AG04450 (cell line): ENCODE measurements at regions of chr14 and their contacts with region 1.

Region 1: DNA sequence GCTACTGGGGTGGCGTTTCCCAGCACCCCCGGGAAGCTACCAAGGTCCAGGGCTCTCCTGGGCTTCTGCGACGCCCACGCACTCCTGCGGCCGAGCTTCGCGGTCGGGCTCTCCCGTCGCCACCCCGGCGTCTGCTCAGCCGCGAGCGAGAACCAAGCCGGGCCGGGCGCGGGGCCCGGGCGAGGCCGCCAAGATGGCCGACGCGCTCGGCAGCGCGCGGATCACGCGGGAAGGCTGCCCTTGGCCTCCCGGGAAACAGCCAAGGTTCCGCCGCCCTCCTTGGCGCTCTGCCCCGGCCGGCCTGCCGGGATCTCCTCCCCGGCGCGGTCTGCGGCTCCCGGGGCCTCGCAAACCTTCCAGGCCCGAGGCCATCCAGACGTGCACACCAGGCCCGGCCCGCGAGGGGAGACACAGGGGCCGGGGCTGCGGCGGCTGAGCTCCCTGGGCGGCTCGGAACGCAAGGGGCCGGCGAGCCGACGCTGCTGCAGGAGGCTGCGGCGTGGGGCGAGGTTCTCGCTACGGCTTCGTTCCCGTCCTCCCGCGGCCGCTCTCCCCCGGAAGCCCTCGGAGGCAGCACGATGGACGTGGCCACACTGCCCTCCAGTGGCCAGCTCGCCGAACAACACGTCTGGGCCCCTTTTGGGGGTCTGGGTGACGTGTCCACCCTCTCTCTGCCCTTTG is 23.5 kb upstream of the ZFP36L1 start:
- DNase-seq: peak; percentile 79
- H3K4me3 ChIP-seq: peak overlapping the region; percentile 46
- H3K27ac ChIP-seq: peak overlapping the region; percentile 95
- H3K27me3 ChIP-seq: no peaks in the 10 kb centered on the region
- CTCF ChIP-seq: peak; percentile 94

Region 2: DNA sequence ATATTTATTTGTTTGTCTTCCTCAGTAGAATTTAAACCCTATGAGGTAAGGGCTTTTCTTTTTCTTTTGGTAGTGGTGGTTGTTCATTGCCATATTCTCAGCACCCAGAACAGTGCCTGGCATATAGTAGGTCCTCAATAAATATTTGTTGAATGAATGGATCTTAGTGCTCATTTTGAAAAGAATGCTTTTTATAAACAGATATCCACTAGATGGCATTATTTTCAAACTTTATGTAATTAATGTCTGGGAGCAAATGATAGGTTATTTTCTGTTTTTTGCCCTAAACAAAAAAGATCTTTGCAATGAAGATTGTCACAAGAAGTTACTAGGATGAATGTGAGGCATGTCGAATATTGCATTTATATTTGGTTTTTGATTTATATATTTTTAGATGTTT is 932.7 kb before region 1 on chr14:
- CTCF ChIA-PET with region 1: interaction called, 13 read pairs
- POLR2A ChIA-PET with region 1: no interaction called
- DNase-seq: no peak
- H3K4me3 ChIP-seq: no peak overlapping the region
- H3K27ac ChIP-seq: no peak overlapping the region
- H3K27me3 ChIP-seq: no peaks in the 10 kb centered on the region
- CTCF ChIP-seq: peak; percentile 28

Region 3: DNA sequence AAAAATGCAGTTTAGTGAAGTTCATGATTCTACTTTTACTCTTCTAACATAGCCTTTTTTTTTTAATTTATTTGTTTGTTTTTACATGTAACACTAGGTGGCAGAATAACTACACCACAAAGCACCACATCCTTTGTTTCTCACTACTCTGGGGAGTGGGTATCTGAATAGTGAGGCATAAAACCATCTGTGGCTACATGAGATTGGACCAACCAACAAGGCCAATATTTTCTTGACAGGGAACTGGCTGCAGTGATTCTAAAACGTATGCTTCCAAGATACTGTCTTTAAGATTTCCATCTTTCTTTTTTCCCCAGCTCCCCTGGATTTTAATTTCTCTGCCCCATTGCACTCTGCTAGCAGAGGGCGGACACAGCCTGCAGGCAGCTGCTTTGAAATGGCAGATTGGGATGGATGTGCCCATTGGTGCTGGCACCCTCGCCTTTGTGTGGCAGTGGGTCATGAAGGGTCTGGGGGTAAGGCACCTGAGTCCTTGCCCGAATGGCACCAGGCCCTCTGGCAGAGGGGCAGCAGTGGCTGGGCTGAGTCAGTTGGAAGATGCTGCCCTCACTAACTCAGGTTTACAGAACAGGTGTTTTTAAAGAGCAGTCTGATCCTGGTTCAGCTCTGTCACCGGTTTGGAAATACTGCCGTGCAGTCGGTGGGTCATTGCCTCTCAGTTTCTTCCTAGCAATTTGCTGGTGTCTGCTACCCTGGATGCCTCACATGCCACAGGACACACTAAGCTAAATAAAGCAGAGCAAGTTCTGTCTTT is 567.7 kb before region 1 on chr14:
- CTCF ChIA-PET with region 1: interaction called, 28 read pairs
- POLR2A ChIA-PET with region 1: interaction called, 5 read pairs
- DNase-seq: no peak
- H3K4me3 ChIP-seq: no peak overlapping the region
- H3K27ac ChIP-seq: peak overlapping the region; percentile 33
- H3K27me3 ChIP-seq: no peaks in the 10 kb centered on the region
- CTCF ChIP-seq: peak; percentile 60

Region 4: DNA sequence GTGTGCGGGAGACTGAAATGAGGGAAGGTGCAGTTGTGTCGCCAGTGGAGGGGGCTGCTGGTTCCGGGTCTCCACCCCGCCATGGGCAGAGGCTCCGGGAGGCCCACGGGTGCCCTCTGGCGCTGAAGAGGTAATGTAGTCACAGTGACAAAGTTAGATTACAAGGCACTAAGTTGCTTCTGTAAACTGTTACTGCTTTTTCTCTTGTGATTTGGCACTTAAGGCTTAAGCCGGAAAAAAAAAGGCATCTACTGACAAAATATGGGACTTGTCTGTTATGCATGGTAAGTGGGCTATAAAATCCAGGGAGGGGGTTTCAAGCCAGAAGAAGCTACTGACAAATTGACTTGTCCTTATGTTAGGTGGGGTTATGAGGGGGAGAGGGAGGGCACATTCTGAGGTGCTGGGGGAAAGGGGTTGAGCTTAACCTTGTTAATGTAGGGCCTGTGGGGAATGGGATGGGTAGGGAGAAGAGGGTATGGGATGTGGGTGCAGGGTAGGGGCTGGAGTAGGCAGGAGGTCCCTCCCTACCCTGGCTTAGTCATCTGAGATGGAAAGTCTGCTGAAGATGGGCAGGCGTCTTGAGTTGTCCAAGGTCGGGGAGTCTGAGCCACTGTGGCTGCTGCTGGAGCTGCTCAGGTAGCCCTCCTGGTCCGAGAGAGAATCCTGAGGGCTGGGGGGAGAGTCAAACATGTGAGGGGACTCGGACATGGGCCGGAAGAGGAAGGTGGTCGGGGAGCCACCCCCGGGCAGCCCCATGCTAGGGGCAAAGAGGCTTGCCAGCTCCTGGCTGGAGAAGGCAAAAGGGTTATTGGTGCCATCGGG is 27.2 kb before region 1 on chr14:
- CTCF ChIA-PET with region 1: interaction called, 19 read pairs
- POLR2A ChIA-PET with region 1: interaction called, 105 read pairs
- DNase-seq: no peak
- H3K4me3 ChIP-seq: peak overlapping the region; percentile 100
- H3K27ac ChIP-seq: peak overlapping the region; percentile 100
- H3K27me3 ChIP-seq: no peaks in the 10 kb centered on the region
- CTCF ChIP-seq: peak; percentile 76

Region 5: GRCh38 chr14:68834816-68835215 is 18.4 kb after region 1 on chr14:
- CTCF ChIA-PET with region 1: no interaction called
- POLR2A ChIA-PET with region 1: no interaction called
- DNase-seq: no peak
- H3K4me3 ChIP-seq: no peak overlapping the region
- H3K27ac ChIP-seq: no peak overlapping the region
- H3K27me3 ChIP-seq: no peaks in the 10 kb centered on the region
- CTCF ChIP-seq: no peak